ENCODE measurements at regions of chr10 and their contacts with region 1.

Region 1: GRCh38 chr10:102678842-102679289 is 34.6 kb downstream of the TRIM8 start:
- DNase-seq: peak; percentile 70 to 92 (median 84)

Region 2: GRCh38 chr10:102185811-102186527 is 492.9 kb before region 1 on chr10:
- intact Hi-C with region 1: no loop called
- DNase-seq: no peak

Region 3: DNA sequence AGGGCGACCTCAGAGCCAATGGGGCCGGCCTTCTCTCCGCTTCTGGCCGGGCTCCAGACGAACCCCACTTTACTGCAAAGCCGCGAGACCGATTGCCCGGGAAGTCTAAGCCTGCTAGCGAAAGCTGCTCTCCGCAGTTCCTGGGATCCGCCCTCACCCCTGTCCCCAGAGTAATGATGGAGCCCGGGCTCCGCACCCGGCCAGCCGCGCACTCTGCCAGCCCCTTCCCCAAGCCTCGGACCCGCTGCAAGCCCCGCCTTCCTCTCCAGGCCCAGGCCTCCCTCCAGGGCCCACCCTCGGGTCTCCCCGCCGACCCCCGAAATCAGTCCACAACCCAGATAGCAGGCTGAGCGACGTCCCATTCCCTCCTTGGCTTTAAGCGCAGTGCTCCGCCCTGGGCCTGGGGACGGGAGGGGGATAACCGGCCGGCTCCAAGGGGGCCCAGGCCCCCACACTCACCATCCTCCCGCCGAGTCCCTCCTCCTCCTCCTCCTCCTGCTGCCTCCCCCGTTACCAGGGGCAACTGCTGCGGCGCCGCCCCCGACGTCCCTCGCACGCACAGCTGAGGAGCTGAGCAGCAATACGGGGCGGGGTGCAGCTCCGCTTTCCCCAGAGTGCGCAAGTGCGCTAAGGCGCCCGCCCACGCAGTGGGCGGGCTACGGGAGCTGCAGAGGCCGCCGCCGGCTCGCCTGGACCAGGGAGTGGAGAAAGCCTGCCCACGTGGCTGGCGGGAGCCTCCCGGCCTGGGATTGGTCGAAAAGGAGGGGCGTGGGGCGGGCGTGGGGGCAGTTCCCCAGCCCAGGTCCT is 35.2 kb after region 1 on chr10 and contains the start of gene ARL3:
- intact Hi-C with region 1: loop called (anchors 5 kb)
- DNase-seq: peak; percentile 92 to 99 (median 98)

Region 4: GRCh38 chr10:102785621-102786217 is 106.9 kb after region 1 on chr10:
- intact Hi-C with region 1: no loop called
- DNase-seq: no peak

Region 5: DNA sequence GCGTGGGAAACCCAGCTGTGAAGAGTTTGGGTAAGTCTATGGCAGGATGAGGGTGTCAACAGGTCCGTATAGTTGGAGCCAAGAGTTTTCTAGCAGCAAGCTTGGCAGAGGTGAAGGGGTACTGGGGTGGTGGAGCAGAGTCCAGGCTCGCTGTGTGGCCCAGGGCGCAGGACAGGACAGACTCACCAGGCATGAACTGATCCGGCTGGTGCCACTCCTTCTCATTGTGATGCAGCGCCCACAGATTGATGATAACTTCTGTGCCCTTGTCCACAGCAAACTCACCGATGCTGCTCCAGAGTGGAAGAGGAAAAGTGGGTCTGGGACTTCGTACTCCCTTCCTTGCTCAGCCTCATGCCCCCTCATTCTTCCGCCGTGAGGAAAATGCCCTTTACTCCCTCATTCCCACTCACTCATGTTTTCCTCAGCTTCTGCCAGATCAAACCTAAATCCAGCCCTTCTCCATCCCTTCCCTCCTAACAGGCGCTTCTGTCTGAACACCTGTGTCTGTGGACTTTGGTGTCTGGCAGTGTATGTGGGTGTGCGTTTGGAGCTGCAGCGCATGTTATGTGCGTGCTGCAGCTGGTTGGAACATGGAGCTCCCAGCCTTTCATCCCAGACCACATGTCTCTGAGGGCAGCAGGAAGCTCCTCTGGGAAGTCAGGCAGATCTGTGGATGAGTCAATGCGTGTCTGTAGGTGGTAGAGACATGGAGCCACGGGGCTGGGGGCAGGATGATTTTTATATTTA is 152.6 kb after region 1 on chr10:
- intact Hi-C with region 1: no loop called
- DNase-seq: peak in 16 of 42 donors; percentile 6 to 61 (median 34)